ENCODE measurements at regions of chr22 and their contacts with region 1.

Region 1: GRCh38 chr22:17773606-17774205 is 563 bp downstream of the BID start:
- DNase-seq: peak; percentile 63
- ATAC-seq: peak; percentile 34
- H3K4me3 Mint-ChIP-seq: peak overlapping the region; percentile 86
- H3K27ac Mint-ChIP-seq: peak overlapping the region; percentile 74
- H3K4me1 Mint-ChIP-seq: peaks cover 79% of the 10 kb centered on the region
- H3K27me3 Mint-ChIP-seq: no peaks in the 10 kb centered on the region
- CTCF ChIP-seq: no peak

Region 2: GRCh38 chr22:17603668-17604067 is 170.0 kb before region 1 on chr22:
- CTCF ChIA-PET with region 1: no interaction called
- POLR2A ChIA-PET with region 1: interaction called, 16 read pairs
- intact Hi-C with region 1: no loop called
- DNase-seq: no peak
- ATAC-seq: no peak
- H3K4me3 Mint-ChIP-seq: no peak overlapping the region
- H3K27ac Mint-ChIP-seq: no peak overlapping the region
- H3K4me1 Mint-ChIP-seq: no peaks in the 10 kb centered on the region
- H3K27me3 Mint-ChIP-seq: no peaks in the 10 kb centered on the region
- CTCF ChIP-seq: no peak

Region 3: GRCh38 chr22:17706018-17706900 is 67.4 kb before region 1 on chr22:
- CTCF ChIA-PET with region 1: no interaction called
- POLR2A ChIA-PET with region 1: interaction called, 10 read pairs
- intact Hi-C with region 1: no loop called
- DNase-seq: no peak
- ATAC-seq: peak; percentile 89
- H3K4me3 Mint-ChIP-seq: peak overlapping the region; percentile 56
- H3K27ac Mint-ChIP-seq: peak overlapping the region; percentile 81
- H3K4me1 Mint-ChIP-seq: peaks cover 21% of the 10 kb centered on the region
- H3K27me3 Mint-ChIP-seq: no peaks in the 10 kb centered on the region
- CTCF ChIP-seq: no peak

Region 4: GRCh38 chr22:17761138-17761488 is 12.6 kb before region 1 on chr22:
- CTCF ChIA-PET with region 1: no interaction called
- POLR2A ChIA-PET with region 1: interaction called, 7 read pairs
- intact Hi-C with region 1: loop called (anchors 2 kb)
- DNase-seq: no peak
- ATAC-seq: no peak
- H3K4me3 Mint-ChIP-seq: no peak overlapping the region
- H3K27ac Mint-ChIP-seq: no peak overlapping the region
- H3K4me1 Mint-ChIP-seq: peaks cover 36% of the 10 kb centered on the region
- H3K27me3 Mint-ChIP-seq: no peaks in the 10 kb centered on the region
- CTCF ChIP-seq: no peak

Region 5: DNA sequence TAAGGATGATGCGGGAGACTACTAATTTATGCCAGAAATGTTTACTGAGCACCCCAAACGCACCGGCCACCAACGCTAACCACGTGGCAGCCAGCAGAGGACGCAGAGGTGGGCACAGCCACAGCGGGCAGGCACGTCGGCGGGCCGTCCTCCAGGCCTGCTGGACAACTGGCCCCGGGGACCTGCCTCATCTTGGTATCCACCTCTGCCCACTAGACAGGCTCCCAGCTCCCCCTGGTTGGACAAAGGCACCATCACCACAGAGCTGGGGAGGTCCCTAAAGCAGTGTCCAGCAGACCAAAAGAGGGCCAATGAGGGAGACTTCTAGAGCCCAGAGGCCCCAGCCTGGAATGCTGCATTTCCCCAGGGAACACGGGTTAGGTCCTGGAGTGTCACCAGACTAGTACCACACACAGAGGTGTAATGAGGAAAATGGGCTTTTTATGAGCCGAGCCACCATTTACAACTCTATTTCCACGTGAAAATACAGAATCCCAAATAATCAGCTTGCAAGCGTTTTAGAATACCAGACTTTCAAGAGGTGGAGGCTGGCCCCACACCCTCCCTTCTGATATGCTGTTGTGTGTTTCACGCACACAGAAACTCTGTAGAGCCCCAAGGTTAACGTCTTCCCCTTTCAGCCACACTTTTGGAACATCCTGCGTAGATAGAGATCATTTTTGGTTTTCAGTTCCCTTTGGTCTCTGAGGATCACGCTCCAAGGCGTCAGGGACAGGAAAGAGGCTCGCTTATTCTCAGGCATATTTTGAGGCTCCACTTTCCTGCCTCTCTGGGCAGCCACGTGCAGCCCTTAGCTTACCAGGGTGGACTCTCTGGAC is 24.2 kb after region 1 on chr22:
- CTCF ChIA-PET with region 1: interaction called, 3 read pairs
- POLR2A ChIA-PET with region 1: interaction called, 581 read pairs
- intact Hi-C with region 1: no loop called
- DNase-seq: peak; percentile 41
- ATAC-seq: peak; percentile 62
- H3K4me3 Mint-ChIP-seq: peak overlapping the region; percentile 49
- H3K27ac Mint-ChIP-seq: peak overlapping the region; percentile 99
- H3K4me1 Mint-ChIP-seq: peaks cover 87% of the 10 kb centered on the region
- H3K27me3 Mint-ChIP-seq: no peaks in the 10 kb centered on the region
- CTCF ChIP-seq: no peak

Measured in activated B cell treated with CpG ODN at 0.5 μM for 24 hours (primary cell).